Psoas muscle (tissue), 8 donors: ENCODE measurements at regions of chr21 and their contacts with region 1.

Region 1: GRCh38 chr21:44949779-44950198 is 10.0 kb downstream of the SLX9 start:
- DNase-seq: peak; percentile 90 to 95
- ATAC-seq: peak; percentile 45 to 63 (median 53)
- H3K4me3 ChIP-seq: no peak overlapping the region
- H3K27ac ChIP-seq: peak overlapping the region; percentile 55
- H3K4me1 ChIP-seq: peaks cover 78% of the 10 kb centered on the region
- H3K27me3 ChIP-seq: no peaks in the 10 kb centered on the region
- CTCF ChIP-seq: peak; percentile 97

Region 2: DNA sequence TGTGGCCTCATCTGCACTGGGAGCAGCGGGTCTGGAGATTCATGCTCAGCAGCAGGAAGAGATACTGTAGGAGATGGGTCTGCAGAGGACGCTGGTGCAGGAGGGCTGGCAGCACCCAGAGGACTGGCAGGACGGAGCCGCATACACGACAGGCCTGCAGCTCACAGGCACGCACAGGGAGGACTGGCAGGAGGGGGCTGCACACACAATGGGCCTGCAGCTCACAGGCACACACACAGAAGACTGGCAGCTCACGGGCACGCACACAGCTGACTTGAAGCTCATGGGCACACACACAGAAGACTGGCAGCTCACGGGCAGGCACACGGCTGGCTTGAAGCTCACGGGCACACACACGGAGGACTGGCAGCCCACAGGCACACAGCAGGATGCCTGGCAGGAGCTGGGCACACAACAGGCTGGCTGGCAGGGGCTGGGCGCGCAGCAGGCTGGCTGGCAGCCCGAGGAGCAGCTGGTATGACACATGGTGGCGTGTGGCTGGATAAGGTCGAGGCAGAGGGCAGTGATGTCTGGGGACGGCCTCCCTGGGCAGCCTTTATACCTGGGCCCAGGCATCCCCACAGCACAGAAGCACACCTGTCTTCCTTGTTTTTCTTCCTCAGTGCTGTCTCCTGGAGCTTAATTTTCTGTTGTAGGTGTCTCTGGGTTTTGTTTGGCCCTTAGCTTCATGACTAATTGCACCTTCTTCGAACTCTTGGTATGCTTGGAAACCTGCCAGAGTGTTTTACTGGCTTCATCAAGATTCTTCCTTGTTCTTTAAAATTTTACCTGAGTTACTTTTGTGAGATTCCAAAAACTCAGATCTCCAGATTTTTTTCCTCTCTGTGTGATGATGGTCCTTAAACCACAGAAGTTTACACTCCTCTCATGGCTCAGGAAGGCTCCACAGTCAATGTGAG is 283.1 kb before region 1 on chr21 and contains the start of gene KRTAP12-2:
- intact Hi-C with region 1: no loop called
- DNase-seq: no peak
- ATAC-seq: peak in 3 of 4 donors; percentile 30 to 56 (median 41)
- H3K4me3 ChIP-seq: no peak within 1 kb of the TSS
- H3K27ac ChIP-seq: no peak within 1 kb of the TSS
- H3K4me1 ChIP-seq: no peaks in the 10 kb centered on the region
- H3K27me3 ChIP-seq: peaks cover 0 to 18% (median 0%) of the 10 kb centered on the region in 3 donors
- CTCF ChIP-seq: no peak
- total RNA-seq, gene KRTAP12-2: not detected

Region 3: DNA sequence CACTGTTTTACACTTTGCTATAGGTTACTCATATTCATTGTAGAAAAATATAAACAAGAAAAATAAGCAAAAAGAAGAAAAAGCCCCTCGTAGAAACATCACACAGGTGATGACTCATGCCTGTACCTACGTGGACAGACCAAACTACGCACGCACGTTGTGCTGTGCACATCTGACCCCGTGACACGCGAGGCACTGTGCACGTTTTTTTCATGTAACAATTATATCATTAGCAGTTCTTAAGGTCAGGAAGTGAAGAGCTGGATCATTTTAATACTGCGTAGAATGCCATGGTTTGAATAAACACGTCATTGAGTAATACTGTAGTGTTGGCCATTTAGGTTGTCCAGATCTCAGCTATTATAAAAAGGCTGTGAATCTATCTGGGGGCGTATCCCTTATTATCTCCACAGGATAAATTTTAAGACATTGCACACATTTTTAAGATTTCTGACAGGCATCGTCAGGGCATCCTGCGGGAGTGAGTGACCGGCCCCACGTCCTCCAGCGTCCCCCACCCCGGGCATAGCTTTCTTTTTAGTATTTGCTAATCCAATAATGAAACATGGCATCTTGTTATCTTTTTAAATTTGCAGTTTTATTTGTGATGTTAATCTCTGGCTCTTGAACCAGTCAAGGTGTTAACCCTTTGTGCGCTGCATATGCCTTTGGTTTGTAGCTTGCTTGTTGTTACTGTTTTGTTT is 101.1 kb after region 1 on chr21:
- intact Hi-C with region 1: loop called in 1 of 2 experiments (anchors 5 kb)
- DNase-seq: no peak
- ATAC-seq: peak; percentile 36 to 49 (median 47)
- H3K4me3 ChIP-seq: no peak overlapping the region
- H3K27ac ChIP-seq: peak overlapping the region; percentile 83
- H3K4me1 ChIP-seq: peaks cover 43% of the 10 kb centered on the region
- H3K27me3 ChIP-seq: no peaks in the 10 kb centered on the region
- CTCF ChIP-seq: no peak

Region 4: DNA sequence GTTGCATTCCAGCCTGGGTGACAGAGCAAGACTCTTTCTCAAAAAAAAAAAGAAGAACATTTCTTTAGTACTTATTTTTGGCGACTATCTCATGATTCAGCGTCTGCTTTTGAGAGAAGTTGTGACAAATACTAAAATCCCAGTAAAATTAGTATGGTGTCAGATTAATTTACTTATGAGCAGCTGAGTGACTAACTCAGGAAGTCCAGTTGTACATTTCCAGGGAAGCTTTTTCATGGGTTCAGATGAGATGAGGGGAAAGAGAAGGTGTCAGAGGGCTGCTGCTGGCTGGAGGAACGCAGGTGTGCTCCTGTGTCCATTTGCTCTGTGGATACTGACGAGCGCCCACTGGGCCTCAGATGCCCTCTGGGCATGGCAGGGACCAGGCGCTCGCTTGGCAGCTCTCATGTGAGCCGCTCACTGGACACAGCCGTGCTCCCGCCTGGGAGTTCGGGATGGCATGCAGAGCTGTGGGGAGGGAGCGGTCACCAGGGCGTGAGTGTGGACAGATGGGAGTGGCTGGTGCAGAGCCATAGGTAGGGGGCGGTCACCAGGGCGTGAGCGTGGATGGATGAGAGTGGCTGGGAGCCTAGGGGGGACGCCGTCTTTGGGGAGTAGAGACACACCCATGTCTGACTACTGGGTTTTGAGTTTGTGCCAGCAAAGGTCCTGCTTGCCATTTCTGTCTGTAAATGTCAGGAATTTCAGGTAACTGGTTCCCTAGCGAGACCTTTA is 179.6 kb after region 1 on chr21:
- intact Hi-C with region 1: loop called (anchors 2 kb)
- DNase-seq: peak; percentile 62 to 75
- ATAC-seq: peak; percentile 63 to 66 (median 64)
- H3K4me3 ChIP-seq: peak overlapping the region; percentile 25
- H3K27ac ChIP-seq: peak overlapping the region; percentile 69
- H3K4me1 ChIP-seq: peaks cover 65% of the 10 kb centered on the region
- H3K27me3 ChIP-seq: no peaks in the 10 kb centered on the region
- CTCF ChIP-seq: no peak